ENCODE measurements at regions of chr1 and their contacts with region 1.

Region 1: DNA sequence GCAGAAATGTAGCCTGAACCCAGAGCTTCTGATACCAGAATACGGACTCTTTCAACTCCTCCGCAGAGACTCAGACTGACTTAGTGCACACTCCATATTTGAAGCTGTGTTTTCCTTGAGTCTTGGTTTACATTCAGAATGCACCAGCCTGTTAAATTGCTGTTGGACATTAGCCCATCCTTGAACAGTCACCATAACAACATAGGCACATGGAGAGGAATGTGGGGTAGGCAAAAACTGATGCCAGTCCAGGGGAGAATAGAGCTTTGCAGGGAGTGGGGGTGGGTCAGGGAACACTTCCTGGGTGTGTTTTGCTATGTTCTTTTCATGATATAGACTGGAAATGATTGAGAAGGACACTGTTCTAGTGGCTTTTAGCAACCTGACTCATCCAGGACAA is 76.3 kb upstream of the CACNA1E start:
- DNase-seq: no peak
- ATAC-seq: no peak
- H3K4me3 ChIP-seq: no peak overlapping the region
- H3K27ac ChIP-seq: no peak overlapping the region
- H3K4me1 ChIP-seq: no peaks in the 10 kb centered on the region
- H3K27me3 ChIP-seq: no peaks in the 10 kb centered on the region
- CTCF ChIP-seq: no peak
- POLR2A ChIP-seq: no peak

Region 2: GRCh38 chr1:181469829-181470228 is 62.8 kb after region 1 on chr1:
- in situ Hi-C with region 1: no loop called
- intact Hi-C with region 1: loop called (anchors 10 kb)
- DNase-seq: no peak
- ATAC-seq: no peak
- H3K4me3 ChIP-seq: no peak overlapping the region
- H3K27ac ChIP-seq: no peak overlapping the region
- H3K4me1 ChIP-seq: no peaks in the 10 kb centered on the region
- H3K27me3 ChIP-seq: peaks cover 0 to 4% (median 0%) of the 10 kb centered on the region in 3 donors
- CTCF ChIP-seq: no peak
- POLR2A ChIP-seq: no peak